ENCODE measurements at regions of chr6 and their contacts with region 1.

Region 1: GRCh38 chr6:129598244-129599187 is 111.5 kb downstream of the ARHGAP18 start:
- DNase-seq: peak; percentile 67

Region 2: GRCh38 chr6:129709769-129710449 is 111.4 kb after region 1 on chr6 and contains the start of gene ARHGAP18:
- CTCF ChIA-PET with region 1: interaction called, 12 read pairs
- POLR2A ChIA-PET with region 1: no interaction called
- DNase-seq: peak; percentile 89

Region 3: GRCh38 chr6:129730477-129731165 is 132.1 kb after region 1 on chr6:
- CTCF ChIA-PET with region 1: interaction called, 32 read pairs
- POLR2A ChIA-PET with region 1: no interaction called
- DNase-seq: no peak

Region 4: GRCh38 chr6:129748212-129748900 is 149.8 kb after region 1 on chr6:
- CTCF ChIA-PET with region 1: interaction called, 10 read pairs
- POLR2A ChIA-PET with region 1: no interaction called
- DNase-seq: no peak